Common myeloid progenitor, CD34-positive (primary cell): ENCODE measurements at regions of chr3 and their contacts with region 1.

Region 1: GRCh38 chr3:152183473-152183872 is 85.3 kb upstream of the MBNL1 start:
- DNase-seq: peak; percentile 78 to 81 (median 78)
- H3K4me3 ChIP-seq: peak overlapping the region in 1 of 7 experiments; percentile 38
- H3K27ac ChIP-seq: no peak overlapping the region
- H3K4me1 ChIP-seq: peaks cover 0 to 25% (median 13%) of the 10 kb centered on the region in 4 experiments
- H3K27me3 ChIP-seq: no peaks in the 10 kb centered on the region

Region 2: DNA sequence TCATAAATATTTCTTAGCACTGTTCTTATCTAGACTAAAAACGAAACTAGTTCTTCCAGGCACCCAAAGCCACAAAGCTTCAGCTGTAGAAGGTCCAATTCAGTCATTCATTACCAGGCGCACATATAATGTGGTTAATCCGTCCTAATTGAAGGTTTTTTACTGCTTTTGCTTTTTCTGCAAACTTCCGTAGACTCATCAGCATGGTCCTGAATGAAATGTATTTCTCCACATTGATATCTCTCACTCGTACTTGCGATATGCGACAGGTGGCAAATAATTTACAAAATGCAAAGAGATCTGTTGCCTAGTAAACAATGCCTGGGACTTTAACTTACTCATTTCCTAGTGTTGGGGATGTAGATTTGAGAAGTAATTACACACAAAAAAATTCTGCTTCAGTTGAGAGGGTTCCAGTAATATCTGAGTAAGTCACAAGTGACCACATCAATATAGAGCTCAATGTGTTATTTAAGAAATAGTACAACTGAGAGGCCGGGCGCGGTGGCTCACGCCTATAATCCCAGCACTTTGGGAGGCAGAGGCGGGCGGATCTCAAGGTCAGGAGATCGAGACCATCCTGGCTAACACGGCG is 10.3 kb after region 1 on chr3:
- CTCF ChIA-PET with region 1: interaction called, 16 read pairs
- POLR2A ChIA-PET with region 1: no interaction called
- DNase-seq: peak; percentile 55 to 91 (median 83)
- H3K4me3 ChIP-seq: peak overlapping the region in 6 of 7 experiments; percentile 57 to 79 (median 64)
- H3K27ac ChIP-seq: peak overlapping the region; percentile 81 to 89
- H3K4me1 ChIP-seq: peaks cover 32 to 62% (median 43%) of the 10 kb centered on the region in 4 experiments
- H3K27me3 ChIP-seq: no peaks in the 10 kb centered on the region

Region 3: DNA sequence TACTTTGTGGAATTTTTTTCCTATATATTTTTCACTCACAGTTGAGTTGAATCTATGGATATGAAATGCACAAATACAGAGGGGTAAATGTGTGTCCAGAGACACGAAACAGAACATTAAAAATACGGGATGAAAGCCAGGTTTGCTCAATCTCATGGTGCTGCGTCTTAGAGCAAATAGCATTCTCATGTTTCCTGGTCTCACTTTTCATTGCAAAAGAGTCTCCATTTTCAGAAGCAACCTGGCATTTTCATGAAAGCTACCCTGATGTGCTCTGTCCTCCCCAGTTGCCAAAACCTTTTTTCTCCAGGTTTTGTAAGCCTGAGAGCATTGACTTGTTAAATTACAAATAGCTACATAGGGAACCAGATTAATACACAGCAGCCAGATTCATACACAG is 35.7 kb after region 1 on chr3:
- CTCF ChIA-PET with region 1: interaction called, 13 read pairs
- POLR2A ChIA-PET with region 1: no interaction called
- DNase-seq: peak in 2 of 3 donors; percentile 46 to 60
- H3K4me3 ChIP-seq: peak overlapping the region in 1 of 7 experiments; percentile 68
- H3K27ac ChIP-seq: peak overlapping the region in 1 of 2 experiments; percentile 56
- H3K4me1 ChIP-seq: peaks cover 33 to 58% (median 42%) of the 10 kb centered on the region in 4 experiments
- H3K27me3 ChIP-seq: no peaks in the 10 kb centered on the region

Region 4: DNA sequence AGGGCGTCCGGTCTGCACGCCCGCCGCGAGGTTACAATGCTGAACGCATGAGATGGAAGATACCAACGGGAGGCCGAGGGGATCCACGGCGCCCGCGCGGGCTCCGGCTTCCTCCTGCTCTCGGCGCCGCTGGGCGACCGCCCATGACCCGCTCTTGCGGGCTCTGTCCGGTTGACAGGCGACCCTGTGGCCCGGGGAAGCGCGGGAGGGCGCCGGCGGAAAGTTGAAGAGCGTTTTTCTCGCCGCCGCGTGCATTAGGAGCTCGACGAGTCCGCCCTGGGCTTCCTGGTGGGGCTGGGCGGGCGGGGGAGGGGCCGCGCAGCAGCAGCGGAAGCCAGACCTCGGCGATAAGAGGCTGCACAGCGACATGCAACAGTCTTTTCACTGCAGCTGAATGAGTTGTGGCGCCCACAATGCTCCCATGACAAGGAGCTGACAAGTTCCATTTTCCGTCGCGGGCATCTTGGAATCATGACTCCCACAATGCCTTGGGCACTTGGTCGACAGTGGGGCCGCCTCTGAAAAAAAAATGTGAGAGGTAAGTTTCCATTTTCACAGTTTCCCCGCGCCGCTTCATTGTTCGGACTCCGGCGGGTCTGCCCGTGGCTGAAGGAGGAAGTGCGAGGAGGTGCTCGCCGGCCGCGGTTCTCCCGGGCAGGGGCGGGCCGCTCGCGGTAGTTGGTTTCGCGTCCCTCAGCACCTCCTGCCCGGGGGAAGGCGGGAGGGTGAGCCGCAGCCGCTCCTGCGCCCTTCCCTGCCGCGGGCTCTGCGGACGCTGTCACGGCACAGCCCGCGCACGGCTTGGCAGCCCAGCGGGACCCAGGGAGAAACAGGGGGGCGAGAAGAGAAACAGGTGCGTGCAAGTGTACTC is 85.3 kb after region 1 on chr3 and contains the start of gene MBNL1:
- CTCF ChIA-PET with region 1: interaction called, 4 read pairs
- POLR2A ChIA-PET with region 1: interaction called, 11 read pairs
- DNase-seq: peak; percentile 96 to 99 (median 98)
- H3K4me3 ChIP-seq: peak within 1 kb of the TSS; percentile 69 to 100 (median 94)
- H3K27ac ChIP-seq: peak within 1 kb of the TSS; percentile 90 to 96
- H3K4me1 ChIP-seq: peaks cover 29 to 65% (median 53%) of the 10 kb centered on the region in 4 experiments
- H3K27me3 ChIP-seq: no peaks in the 10 kb centered on the region

Region 5: DNA sequence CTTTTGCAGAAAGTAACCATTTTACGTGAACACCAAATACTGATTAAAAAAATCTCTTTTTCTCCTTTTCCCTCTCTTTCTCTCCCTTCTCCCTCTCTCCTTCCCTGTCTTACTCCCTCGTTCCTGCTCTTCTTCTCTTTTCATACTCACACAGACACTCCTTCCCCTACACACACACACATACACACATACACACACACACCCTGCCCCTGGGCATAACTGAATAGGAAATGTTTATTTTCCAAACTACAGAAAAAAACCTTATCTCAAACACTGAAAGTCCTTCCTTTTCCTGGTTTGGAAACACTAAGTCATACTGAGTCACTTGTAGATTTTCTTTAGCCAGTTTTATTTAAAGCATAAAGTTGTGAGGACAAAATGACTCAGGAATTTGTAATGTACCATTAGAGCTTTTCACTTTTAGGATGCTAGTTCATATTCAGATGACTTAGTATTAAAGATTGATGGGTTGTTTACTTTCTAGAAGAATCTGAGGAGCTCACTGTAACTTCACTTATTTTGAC is 147.6 kb after region 1 on chr3:
- CTCF ChIA-PET with region 1: interaction called, 17 read pairs
- POLR2A ChIA-PET with region 1: no interaction called
- DNase-seq: peak; percentile 63 to 78 (median 65)
- H3K4me3 ChIP-seq: peak overlapping the region in 4 of 7 experiments; percentile 26 to 45 (median 38)
- H3K27ac ChIP-seq: peak overlapping the region; percentile 64 to 85
- H3K4me1 ChIP-seq: peaks cover 9 to 80% (median 51%) of the 10 kb centered on the region in 4 experiments
- H3K27me3 ChIP-seq: no peaks in the 10 kb centered on the region